ENCODE measurements at regions of chr1 and their contacts with region 1.

Region 1: DNA sequence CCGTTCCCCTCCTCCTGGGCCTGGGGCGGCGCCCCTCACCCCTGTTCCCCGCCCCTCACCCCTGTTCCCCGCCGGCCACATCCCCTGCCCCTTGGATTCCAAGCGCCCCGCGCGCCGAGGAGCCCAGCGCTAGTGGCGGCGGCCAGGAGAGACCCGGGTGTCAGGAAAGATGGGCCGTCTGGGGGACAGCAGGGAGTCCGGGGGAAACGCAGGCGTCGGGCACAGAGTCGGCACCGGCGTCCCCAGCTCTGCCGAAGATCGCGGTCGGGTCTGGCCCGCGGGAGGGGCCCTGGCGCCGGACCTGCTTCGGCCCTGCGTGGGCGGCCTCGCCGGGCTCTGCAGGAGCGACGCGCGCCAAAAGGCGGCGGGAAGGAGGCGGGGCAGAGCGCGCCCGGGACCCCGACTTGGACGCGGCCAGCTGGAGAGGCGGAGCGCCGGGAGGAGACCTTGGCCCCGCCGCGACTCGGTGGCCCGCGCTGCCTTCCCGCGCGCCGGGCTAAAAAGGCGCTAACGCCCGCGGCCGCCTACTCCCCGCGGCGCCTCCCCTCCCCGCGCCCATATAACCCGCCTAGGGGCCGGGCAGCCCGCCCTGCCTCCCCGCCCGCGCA is at the start of gene TP73:
- DNase-seq: peak; percentile 77
- CTCF ChIP-seq: no peak

Region 2: DNA sequence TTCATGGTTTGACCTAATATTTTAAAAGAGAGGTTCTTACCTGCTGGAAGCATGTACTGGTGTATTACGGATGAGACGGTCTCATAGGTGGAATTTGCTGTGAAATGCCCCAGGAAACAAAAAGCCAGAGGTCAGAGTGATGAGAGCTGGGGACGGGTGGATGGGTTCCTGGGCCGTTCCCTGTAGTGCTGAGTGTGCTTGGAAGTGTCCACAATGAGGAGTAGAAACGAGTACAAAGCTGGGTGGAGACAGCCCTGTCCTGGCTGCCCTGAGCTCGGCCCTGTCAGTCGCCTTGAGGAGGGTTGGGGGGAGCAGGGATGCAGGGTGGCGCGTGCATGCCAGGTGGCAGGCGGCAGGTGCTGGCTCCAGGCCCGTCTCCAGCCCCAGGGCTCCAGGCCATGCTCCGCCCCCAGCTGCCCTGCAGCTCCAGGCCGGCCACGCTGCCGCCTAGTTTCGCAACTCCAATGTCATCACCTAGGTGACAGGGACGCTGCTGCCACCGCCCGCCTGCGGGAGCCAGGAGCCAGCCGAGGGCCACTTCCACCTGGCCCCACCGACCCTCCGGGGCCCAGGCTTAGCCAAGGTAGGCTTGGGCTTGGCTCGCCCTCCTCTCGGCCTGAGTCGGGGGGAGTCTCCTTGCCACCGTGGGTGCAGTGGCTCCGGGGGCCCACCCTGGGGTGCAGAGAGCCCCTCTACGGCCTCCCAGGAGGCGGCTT is 16.7 kb after region 1 on chr1:
- CTCF ChIA-PET with region 1: interaction called, 36 read pairs
- POLR2A ChIA-PET with region 1: interaction called, 7 read pairs
- DNase-seq: no peak
- CTCF ChIP-seq: no peak

Region 3: GRCh38 chr1:3676581-3677470 is 24.8 kb after region 1 on chr1:
- CTCF ChIA-PET with region 1: interaction called, 17 read pairs
- POLR2A ChIA-PET with region 1: interaction called, 9 read pairs
- DNase-seq: peak; percentile 83
- CTCF ChIP-seq: peak; percentile 47

Measured in GM10248 (cell line).